ENCODE measurements at regions of chrX and their contacts with region 1.

Region 1: GRCh38 chrX:129798888-129799287 is 19.1 kb downstream of the SASH3 start:
- DNase-seq: no peak
- H3K4me3 Mint-ChIP-seq: no peak overlapping the region
- H3K27ac Mint-ChIP-seq: peak overlapping the region; percentile 66
- H3K4me1 Mint-ChIP-seq: peaks cover 34% of the 10 kb centered on the region
- H3K27me3 Mint-ChIP-seq: no peaks in the 10 kb centered on the region

Region 2: DNA sequence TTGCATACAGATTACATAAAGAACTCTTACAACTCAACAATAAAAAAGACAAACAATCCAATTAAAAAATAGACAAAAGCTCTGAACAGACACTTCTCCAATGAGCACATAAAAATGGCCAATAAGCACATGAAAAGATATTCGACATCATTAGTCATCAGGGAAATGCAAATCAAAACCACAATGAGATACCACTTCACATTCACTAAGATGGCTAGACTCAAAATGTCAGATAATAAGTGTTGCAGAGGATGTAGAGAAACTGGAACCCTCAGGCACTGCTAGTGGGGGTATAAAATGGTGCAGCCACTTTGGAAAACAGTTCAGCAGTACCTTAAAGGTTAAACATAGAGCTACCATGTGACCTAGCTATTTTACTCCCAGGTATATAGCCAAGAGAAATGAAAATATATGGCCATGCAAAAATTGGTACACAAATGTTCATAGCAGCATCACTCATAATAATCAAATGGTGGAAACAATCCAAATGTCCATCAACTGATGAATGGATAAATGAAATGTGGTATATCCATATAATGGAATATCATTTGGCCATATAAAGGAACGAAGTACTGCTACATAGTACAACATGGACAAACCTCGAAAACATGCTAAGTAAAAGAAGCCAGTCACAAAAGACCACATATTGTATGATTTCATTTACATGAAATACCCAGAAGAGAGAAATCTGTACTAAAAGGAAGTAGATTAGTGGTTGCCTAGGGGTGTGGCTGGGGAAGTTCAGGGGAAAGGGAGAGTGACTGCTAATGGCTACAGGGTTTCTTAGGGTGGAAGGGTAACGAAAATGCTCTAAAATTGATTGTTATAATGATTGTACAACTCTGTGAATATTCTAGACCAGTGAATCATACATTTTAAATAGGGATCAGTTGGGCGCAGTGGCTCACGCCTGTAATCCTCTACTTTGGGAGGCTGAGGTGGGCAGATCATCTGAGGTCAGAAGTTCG is 10.2 kb after region 1 on chrX:
- CTCF ChIA-PET with region 1: no interaction called
- POLR2A ChIA-PET with region 1: interaction called, 16 read pairs
- DNase-seq: no peak
- H3K4me3 Mint-ChIP-seq: no peak overlapping the region
- H3K27ac Mint-ChIP-seq: peak overlapping the region; percentile 35
- H3K4me1 Mint-ChIP-seq: peaks cover 18% of the 10 kb centered on the region
- H3K27me3 Mint-ChIP-seq: no peaks in the 10 kb centered on the region

Region 3: GRCh38 chrX:129876771-129877305 is 78.0 kb after region 1 on chrX:
- CTCF ChIA-PET with region 1: no interaction called
- POLR2A ChIA-PET with region 1: no interaction called
- DNase-seq: no peak
- H3K4me3 Mint-ChIP-seq: no peak overlapping the region
- H3K27ac Mint-ChIP-seq: no peak overlapping the region
- H3K4me1 Mint-ChIP-seq: no peaks in the 10 kb centered on the region
- H3K27me3 Mint-ChIP-seq: no peaks in the 10 kb centered on the region

Measured in activated CD4-positive, alpha-beta memory T cell treated with anti-CD3 and anti-CD28 coated beads, Interleukin-2, amount 10 ng/mL, durations not matched to agents 7 days and 5 days (primary cell).